RWPE1 (cell line): ENCODE measurements at regions of chr14 and their contacts with region 1.

Region 1: GRCh38 chr14:96470331-96470730 is 31.9 kb upstream of the PAPOLA start:
- DNase-seq: no peak
- H3K27ac ChIP-seq: no peak overlapping the region
- CTCF ChIP-seq: no peak

Region 2: DNA sequence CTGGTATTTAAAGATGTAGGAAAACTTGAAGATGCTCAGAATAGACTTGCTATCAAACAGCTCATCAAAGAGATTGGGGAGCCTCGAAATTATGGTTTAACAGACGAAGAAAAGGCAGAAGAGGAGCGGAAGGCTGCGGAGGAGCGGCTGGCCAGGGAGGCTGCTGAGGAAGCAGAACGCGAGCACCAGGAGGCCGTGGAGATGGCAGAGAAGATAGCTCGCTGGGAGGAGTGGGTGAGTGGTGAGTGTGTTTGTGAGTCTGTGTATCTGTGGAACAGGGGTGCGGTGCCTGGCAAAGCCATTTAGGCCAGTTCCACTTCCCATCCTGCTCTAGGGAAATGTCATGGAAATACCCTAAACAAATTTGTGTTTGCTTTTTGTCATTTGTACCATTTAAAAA is 12.7 kb after region 1 on chr14:
- CTCF ChIA-PET with region 1: interaction called, 11 read pairs
- POLR2A ChIA-PET with region 1: no interaction called
- DNase-seq: no peak
- H3K27ac ChIP-seq: no peak overlapping the region
- CTCF ChIP-seq: no peak